ENCODE measurements at regions of chr1 and their contacts with region 1.

Region 1: GRCh38 chr1:229495782-229496181 is 12.4 kb downstream of the NUP133 start:
- DNase-seq: no peak
- ATAC-seq: no peak
- H3K4me3 Mint-ChIP-seq: no peak overlapping the region
- H3K27ac Mint-ChIP-seq: no peak overlapping the region
- H3K4me1 Mint-ChIP-seq: no peaks in the 10 kb centered on the region
- H3K27me3 Mint-ChIP-seq: no peaks in the 10 kb centered on the region
- CTCF ChIP-seq: no peak

Region 2: DNA sequence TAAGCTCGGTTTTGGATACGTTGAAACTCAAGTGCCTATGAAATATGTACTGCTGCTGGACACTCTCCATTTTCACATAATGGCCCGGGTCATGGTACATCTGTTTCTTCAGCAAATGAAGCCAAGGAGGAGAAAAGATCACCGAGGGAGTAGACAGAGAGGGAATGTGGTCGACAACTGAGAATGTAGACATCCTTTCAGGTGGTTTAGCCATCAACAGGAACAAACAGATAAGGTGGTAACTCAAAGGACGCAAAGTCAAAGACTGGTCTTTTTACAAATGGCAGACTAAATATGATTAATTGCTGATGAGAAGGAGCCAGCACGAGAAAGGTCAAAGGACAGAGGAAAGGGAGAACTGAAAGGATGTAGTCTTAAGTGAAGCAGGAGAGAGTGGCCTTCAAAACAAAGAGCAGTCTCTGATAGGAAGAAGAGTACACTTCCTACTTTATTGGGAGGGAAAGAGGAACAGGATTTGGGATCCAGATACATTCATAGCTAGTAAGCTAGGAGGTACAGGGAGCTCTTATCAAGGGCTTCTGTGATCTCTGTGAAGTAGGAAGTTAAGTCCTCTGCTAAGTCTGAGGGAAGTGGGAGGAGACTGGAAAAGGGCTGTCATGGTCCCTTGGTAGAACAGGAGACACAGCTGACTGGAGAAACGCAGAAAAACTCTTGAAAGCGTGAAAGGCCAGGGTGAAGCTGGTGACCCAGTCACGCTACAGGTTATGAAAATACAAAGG is 16.0 kb before region 1 on chr1:
- CTCF ChIA-PET with region 1: interaction called, 28 read pairs
- POLR2A ChIA-PET with region 1: interaction called, 4 read pairs
- intact Hi-C with region 1: no loop called
- DNase-seq: peak; percentile 5
- ATAC-seq: no peak
- H3K4me3 Mint-ChIP-seq: no peak overlapping the region
- H3K27ac Mint-ChIP-seq: no peak overlapping the region
- H3K4me1 Mint-ChIP-seq: peaks cover 9% of the 10 kb centered on the region
- H3K27me3 Mint-ChIP-seq: no peaks in the 10 kb centered on the region
- CTCF ChIP-seq: no peak